ENCODE measurements at regions of chr2 and their contacts with region 1.

Region 1: GRCh38 chr2:65639156-65639864 is 206.9 kb upstream of the SPRED2 start:
- DNase-seq: no peak
- CTCF ChIP-seq: no peak

Region 2: DNA sequence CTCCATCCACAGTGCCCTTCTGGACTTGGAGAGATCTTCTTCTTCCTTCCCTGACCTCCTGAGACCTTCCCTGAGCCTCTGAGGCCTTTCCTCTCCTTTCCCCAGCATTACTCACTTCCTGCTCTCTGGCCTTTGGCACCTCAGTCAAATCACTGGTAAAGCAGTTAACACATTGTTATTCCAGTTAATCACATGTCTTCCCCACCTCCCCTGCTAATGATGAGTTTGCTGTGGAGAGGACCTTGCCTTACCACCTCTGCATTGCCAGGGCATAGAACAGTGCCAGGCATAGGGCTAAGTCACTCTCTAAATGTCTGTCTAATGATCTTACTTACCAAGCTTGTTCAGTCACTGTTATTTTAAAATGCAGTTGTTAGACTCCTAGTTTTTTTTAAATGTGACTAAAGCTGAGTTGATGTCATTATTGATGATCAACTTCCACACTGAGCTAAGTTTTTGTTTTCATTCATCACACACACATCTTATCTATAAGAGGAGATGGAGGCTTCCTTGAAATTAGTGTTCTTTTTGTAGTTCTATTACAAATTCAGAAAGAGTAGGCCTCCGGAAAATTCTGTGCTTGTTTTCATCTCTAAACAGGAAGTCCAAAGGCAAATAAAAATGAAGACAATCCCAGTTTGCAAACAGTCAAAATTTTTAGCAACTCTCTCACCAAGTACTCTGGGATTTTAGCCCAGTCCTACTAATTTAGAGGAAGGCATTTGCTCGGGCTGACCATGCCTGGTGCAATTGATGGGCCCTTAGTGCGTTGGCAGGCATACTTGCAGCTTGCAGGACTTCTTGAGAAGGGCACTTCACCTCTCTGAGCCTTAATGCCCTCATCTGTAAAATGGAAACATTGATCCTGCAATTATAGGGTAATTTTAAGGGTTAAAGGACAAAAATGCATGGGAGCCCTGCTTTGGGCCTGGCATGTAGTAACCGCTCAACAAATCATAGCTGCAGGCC is 93.2 kb before region 1 on chr2:
- CTCF ChIA-PET with region 1: no interaction called
- POLR2A ChIA-PET with region 1: no interaction called
- DNase-seq: no peak
- CTCF ChIP-seq: no peak

Region 3: DNA sequence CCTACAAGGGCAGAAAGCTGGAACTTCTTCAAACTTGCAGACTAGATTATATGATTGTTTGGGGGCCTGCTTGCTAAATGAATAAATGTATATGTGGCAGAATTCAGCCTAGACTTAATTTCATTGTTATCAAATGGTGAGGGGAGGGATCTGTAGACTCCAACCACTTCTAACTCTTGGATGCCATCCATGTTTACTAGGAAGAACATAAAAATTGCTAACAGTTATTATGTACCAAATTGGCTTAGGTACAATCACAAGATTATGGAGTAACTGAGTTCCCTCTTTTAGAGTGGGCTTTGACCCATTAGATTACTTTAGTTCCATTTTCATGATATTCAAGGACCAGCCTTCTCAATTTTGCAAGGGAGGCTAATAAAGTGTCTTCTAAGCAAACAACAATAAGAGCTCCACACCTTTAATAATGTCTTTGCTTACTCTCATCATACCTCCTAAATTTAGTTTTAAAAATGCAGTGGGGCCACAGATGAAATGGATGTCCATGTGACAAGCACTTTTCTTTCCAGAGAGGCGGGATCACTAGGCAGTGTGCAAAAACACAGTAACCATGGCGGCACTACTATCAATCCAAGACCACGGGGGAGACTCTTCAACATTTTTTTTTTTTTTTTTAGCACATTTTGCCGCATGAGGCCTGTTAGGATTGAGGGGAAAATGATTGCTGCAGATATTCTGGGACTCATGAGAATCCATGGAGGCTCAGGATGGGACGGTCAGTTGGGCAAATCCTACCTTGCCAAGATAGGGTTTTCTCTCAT is 10.7 kb after region 1 on chr2:
- CTCF ChIA-PET with region 1: interaction called, 14 read pairs
- POLR2A ChIA-PET with region 1: no interaction called
- DNase-seq: no peak
- CTCF ChIP-seq: no peak

Region 4: GRCh38 chr2:65710779-65711295 is 71.5 kb after region 1 on chr2:
- CTCF ChIA-PET with region 1: interaction called, 22 read pairs
- POLR2A ChIA-PET with region 1: no interaction called
- DNase-seq: no peak
- CTCF ChIP-seq: peak; percentile 39